Psoas muscle (tissue), 8 donors: ENCODE measurements at regions of chr3 and their contacts with region 1.

Region 1: GRCh38 chr3:117526470-117527079 is 817.0 kb downstream of the TUSC7 start:
- DNase-seq: no peak
- ATAC-seq: no peak
- H3K4me3 ChIP-seq: no peak overlapping the region
- H3K27ac ChIP-seq: no peak overlapping the region
- H3K4me1 ChIP-seq: no peaks in the 10 kb centered on the region
- H3K27me3 ChIP-seq: no peaks in the 10 kb centered on the region
- CTCF ChIP-seq: peak; percentile 32

Region 2: DNA sequence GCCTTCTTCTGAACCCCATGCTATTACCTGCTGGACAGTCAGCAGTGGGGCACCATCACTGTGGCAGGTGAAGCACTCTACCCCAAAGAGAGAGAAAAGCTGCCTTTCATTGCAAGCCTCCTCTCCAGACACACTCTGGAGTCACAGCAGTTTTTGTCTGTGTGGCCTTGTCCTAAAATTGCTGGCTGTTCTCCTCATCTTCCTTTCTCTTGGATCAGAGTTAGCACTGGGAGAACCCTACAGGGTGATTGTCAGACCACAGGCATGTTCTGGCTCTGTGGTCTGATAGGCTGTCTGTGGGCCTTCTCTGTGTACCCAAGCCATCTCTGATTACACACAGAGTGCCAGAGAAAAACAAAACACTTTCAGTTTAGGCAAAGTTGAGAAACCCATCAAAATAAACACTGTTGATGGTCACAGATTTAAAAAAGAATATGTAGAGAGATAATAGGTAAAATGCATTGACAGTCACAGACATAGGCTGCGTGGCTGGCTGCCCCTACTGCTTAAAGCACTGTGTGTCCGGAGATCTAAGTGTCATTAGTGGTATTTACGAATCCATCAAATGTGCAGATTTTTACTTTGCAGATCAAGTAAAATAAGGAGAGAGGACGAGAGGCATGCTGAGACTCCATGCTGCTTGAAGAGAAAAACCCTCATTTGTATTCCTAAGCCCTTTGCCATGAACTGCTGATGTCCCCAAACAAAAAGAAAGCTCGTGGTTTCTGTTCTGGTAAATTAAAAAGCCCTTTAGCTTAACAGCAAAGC is 127.1 kb before region 1 on chr3:
- intact Hi-C with region 1: no loop called
- DNase-seq: no peak
- ATAC-seq: peak; percentile 46 to 64 (median 50)
- H3K4me3 ChIP-seq: peak overlapping the region; percentile 8
- H3K27ac ChIP-seq: no peak overlapping the region
- H3K4me1 ChIP-seq: no peaks in the 10 kb centered on the region
- H3K27me3 ChIP-seq: no peaks in the 10 kb centered on the region
- CTCF ChIP-seq: no peak

Region 3: GRCh38 chr3:117443014-117443413 is 83.6 kb before region 1 on chr3:
- intact Hi-C with region 1: no loop called
- DNase-seq: no peak
- ATAC-seq: no peak
- H3K4me3 ChIP-seq: no peak overlapping the region
- H3K27ac ChIP-seq: no peak overlapping the region
- H3K4me1 ChIP-seq: no peaks in the 10 kb centered on the region
- H3K27me3 ChIP-seq: peaks cover 0 to 6% (median 0%) of the 10 kb centered on the region in 3 donors
- CTCF ChIP-seq: no peak

Region 4: DNA sequence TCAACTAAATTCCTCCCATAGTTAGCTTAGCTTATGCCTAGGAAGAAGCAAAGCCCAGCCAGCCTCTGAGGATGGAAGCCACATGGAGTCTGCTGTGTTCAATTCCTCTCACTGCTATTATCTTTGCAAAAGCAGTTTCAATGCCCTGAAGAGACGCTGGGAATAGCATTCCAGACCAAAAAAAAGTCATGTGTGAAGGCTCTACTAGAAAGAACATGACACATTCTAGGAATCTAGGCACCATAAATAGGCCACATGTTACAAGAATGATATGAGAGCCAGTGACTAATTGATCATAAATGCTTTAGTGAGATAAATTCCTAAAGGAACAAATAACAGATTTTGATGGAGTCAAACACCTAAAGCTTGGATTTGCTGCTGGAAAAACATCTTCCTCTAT is 16.2 kb before region 1 on chr3:
- intact Hi-C with region 1: loop called in 1 of 2 experiments (anchors 1 kb)
- DNase-seq: no peak
- ATAC-seq: no peak
- H3K4me3 ChIP-seq: no peak overlapping the region
- H3K27ac ChIP-seq: no peak overlapping the region
- H3K4me1 ChIP-seq: no peaks in the 10 kb centered on the region
- H3K27me3 ChIP-seq: no peaks in the 10 kb centered on the region
- CTCF ChIP-seq: no peak